ENCODE measurements at regions of chr3 and their contacts with region 1.

Region 1: GRCh38 chr3:3998140-3998922 is 199.1 kb downstream of the LRRN1 start:
- DNase-seq: peak; percentile 52
- ATAC-seq: peak; percentile 81
- H3K4me3 ChIP-seq: no peak overlapping the region
- H3K27ac ChIP-seq: no peak overlapping the region
- H3K4me1 ChIP-seq: no peaks in the 10 kb centered on the region
- H3K27me3 ChIP-seq: no peaks in the 10 kb centered on the region
- CTCF ChIP-seq: peak; percentile 80
- EP300 ChIP-seq: no peak
- POLR2A ChIP-seq: no peak
- RAD21 ChIP-seq: peak; percentile 24; the same call in 1 of the 2 replicates

Region 2: DNA sequence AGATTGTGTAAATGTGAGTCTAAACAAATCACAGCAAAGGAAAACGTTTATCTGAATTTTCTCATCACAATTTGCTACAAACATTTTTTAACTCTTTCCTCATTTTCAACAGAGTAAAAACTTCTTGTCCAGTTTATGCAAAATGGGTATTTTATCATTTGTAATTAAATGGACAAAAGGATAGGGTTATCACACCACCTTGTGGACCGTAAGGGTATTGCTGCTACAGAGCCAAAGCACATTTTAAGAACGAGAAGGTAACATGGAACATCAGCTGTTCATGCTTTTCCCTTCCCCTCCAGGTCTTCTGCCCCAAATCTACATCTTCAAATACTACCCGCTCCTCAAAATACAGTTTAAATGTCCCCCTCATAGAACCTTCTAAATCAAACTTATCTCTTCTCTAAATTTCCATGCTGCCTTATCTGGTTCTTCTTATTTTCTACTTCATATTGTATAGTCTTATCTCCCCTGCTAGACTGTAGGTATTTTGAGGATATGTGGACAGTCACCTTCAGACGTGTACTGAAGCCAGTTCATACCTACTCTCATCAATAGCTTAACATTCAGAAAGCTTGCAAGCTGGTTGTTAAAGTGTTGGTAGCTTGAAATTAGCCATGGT is 292.1 kb after region 1 on chr3:
- CTCF ChIA-PET with region 1: no interaction called
- POLR2A ChIA-PET with region 1: no interaction called
- in situ Hi-C with region 1: no loop called
- intact Hi-C with region 1: loop called (anchors 5 kb)
- DNase-seq: peak; percentile 10
- ATAC-seq: no peak
- H3K4me3 ChIP-seq: no peak overlapping the region
- H3K27ac ChIP-seq: no peak overlapping the region
- H3K4me1 ChIP-seq: no peaks in the 10 kb centered on the region
- H3K27me3 ChIP-seq: no peaks in the 10 kb centered on the region
- CTCF ChIP-seq: peak; percentile 74
- EP300 ChIP-seq: no peak
- POLR2A ChIP-seq: no peak
- RAD21 ChIP-seq: no peak

Measured in HepG2 (cell line).